SK-N-SH (cell line): ENCODE measurements at regions of chr6 and their contacts with region 1.

Region 1: GRCh38 chr6:44338228-44339122 is 4.0 kb upstream of the SPATS1 start:
- DNase-seq: peak; percentile 71
- H3K4me3 ChIP-seq: no peak overlapping the region; a peak in 1 of 4 replicates
- H3K27ac ChIP-seq: no peak overlapping the region
- H3K4me1 ChIP-seq: peaks cover 0 to 22% of the 10 kb centered on the region in 2 experiments; a peak in 2 of 4 replicates
- H3K27me3 ChIP-seq: peaks cover 36% of the 10 kb centered on the region
- CTCF ChIP-seq: peak; percentile 84
- EP300 ChIP-seq: no peak
- RAD21 ChIP-seq: peak; percentile 92

Region 2: DNA sequence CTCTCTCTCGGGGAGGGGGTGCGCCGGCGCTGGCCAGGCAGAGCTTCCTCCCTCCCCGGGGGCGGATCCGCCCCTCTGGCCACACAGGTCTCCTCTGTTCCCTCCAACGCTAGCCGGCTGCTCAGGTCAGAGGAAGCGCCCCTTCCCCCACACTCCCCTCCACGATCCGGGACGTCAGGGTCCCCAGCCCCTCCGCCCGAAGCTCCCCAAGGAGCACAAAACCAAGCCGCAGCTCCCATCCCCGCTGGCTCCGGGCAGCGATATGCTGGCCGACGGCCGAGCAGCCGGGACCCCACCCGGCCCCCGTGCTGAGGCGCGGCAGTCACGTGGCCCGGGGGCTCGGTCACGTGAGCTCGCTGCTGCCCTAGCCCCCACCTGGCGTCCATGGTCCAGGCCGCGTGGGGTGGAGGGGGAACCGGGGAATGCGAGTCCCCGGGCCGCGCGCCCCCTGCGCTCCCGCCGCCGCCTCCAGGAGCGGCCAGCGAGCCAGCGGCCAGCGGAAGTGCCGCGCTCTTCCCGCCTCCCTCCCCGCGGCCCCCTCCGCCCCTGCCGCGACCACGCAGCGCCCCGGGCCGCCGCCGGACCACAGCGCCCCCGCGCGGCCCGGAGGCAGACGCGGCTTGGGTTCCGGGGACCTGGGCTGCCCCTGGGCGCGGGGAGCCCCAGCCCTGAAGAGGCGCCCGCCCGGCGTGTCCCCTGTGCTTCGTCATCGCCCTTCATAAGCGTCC is 81.3 kb before region 1 on chr6 and contains the start of gene SLC35B2:
- CTCF ChIA-PET with region 1: interaction called, 24 read pairs
- POLR2A ChIA-PET with region 1: interaction called, 5 read pairs
- DNase-seq: peak; percentile 95
- H3K4me3 ChIP-seq: peak within 1 kb of the TSS; percentile 94 to 96
- H3K27ac ChIP-seq: peak within 1 kb of the TSS; percentile 73 to 91
- H3K4me1 ChIP-seq: peaks cover 0 to 37% of the 10 kb centered on the region in 2 experiments; a peak in 1 of 4 replicates
- H3K27me3 ChIP-seq: no peaks in the 10 kb centered on the region
- CTCF ChIP-seq: peak; percentile 67
- EP300 ChIP-seq: no peak
- RAD21 ChIP-seq: no peak
- polyA plus RNA-seq, gene SLC35B2: 125 and 163 TPM in 2 replicates

Region 3: GRCh38 chr6:44270526-44271405 is 67.7 kb before region 1 on chr6:
- CTCF ChIA-PET with region 1: interaction called, 220 read pairs
- POLR2A ChIA-PET with region 1: interaction called, 10 read pairs
- DNase-seq: peak; percentile 96
- H3K4me3 ChIP-seq: peak overlapping the region in 1 of 2 experiments; percentile 51; a peak in 2 of 4 replicates
- H3K27ac ChIP-seq: peak overlapping the region in 1 of 2 experiments; percentile 58; a peak in 1 of 4 replicates
- H3K4me1 ChIP-seq: peaks cover 2 to 21% of the 10 kb centered on the region in 2 experiments; a peak in 1 of 4 replicates
- H3K27me3 ChIP-seq: peaks cover 36% of the 10 kb centered on the region
- CTCF ChIP-seq: no peak
- EP300 ChIP-seq: no peak
- RAD21 ChIP-seq: no peak

Region 4: DNA sequence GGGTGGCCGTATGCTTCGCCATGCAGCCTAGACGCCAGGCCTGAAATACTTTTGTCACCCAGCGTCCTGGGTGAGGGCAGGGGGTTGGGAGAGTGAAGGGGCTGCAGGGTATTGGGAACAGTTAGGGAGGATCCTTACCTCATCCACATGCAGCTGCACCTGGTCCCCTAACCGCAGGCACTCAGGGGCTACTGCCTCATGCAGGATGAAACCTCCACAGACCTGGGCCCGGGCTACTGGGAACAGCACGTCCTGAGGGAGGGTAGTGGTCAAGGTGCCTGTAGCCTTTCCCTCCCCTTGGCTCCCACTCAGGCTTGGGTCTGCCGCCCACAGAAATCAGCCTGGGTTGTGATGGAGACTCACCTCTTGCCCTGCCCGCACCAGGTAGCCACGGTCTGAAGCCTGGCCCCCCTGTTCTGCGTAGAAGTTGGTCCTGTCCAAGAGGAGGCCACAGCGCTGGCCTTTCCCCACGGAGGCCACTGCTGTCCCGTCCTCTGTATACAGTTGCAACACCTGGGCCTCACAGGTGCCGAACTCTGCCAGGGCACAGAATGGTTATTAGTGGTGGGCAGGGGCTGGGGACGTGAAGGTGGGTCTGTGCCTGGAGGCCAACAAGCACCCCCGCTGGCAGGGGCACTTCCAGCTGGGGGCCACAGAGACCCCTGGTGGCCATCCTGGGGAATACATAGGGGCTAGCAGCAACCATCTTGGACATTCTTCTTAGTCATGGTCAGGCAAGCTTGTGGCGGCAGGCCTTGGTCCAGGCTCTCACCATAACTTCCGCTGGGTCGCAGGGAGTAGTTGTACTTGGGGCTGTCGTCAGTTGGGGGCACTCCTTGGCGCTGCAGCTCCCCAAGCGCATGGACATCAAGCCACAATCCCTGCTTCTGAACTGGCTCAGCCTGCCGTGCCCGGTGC is 33.9 kb before region 1 on chr6:
- CTCF ChIA-PET with region 1: interaction called, 47 read pairs
- POLR2A ChIA-PET with region 1: no interaction called
- DNase-seq: peak; percentile 84
- H3K4me3 ChIP-seq: no peak overlapping the region
- H3K27ac ChIP-seq: no peak overlapping the region; a peak in 1 of 4 replicates
- H3K4me1 ChIP-seq: no peaks in the 10 kb centered on the region
- H3K27me3 ChIP-seq: no peaks in the 10 kb centered on the region
- CTCF ChIP-seq: peak; percentile 76
- EP300 ChIP-seq: no peak
- RAD21 ChIP-seq: peak; percentile 54

Region 5: DNA sequence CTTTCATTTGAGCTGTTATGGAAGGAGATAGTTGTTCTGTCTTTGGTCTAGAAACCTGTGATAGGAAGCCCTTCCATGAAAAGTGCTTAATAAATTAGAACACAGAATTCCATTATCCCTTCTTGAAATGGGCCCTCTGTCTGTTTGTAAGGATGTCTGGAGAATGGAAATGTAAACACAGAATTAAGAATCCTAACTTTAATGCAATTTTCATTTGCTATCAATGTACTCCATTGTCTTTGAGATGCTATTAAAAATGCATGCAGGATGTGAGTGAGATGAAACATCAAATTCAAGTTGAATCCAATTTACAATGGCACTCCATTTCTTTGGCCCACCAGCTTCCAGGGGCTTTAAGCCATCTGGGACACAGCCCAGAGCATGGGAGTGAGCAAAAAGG is 11.4 kb before region 1 on chr6:
- CTCF ChIA-PET with region 1: interaction called, 14 read pairs
- POLR2A ChIA-PET with region 1: interaction called, 5 read pairs
- DNase-seq: no peak
- H3K4me3 ChIP-seq: no peak overlapping the region
- H3K27ac ChIP-seq: no peak overlapping the region
- H3K4me1 ChIP-seq: no peaks in the 10 kb centered on the region
- H3K27me3 ChIP-seq: peaks cover 21% of the 10 kb centered on the region
- CTCF ChIP-seq: no peak
- EP300 ChIP-seq: no peak
- RAD21 ChIP-seq: no peak

Region 6: DNA sequence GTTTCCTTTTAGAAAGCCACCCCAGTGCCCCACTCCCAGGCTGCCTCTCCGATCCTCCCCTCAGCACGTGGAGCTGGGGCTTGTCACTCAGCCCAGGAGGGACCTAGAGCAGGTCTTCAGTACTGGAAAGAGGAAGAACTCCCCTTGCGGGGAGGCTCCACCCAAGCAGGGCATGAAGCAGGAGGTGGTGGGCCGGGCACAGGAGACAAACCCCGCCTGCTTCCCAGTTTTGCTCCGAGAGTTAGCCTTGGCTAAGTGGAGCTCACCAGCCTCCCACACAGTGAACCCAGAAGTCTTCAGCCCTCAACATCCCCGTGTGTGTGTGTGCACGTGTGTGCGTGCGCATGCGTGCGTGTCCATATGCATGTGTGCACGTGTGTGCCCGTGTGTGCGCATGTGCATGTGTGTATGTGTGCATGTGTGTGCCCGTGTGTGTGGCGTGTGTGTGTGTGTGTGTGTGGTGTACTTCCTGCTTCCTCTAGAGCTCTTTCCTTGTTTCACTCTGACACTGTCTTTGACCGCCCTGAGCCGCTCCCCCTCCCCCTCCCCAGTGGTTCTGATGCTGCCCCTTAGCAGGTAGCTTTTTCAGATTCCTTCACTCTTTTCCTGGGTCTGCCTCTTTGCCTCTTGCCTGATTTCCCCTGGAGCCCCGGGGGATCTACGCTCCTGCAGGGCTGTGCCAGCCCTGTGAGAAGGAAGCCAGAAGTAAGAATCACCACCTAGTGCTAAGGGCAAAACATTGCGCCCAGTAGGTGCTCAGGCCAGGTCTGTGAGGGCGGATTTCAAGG is 288.8 kb after region 1 on chr6:
- CTCF ChIA-PET with region 1: no interaction called
- POLR2A ChIA-PET with region 1: no interaction called
- DNase-seq: no peak
- H3K4me3 ChIP-seq: no peak overlapping the region
- H3K27ac ChIP-seq: no peak overlapping the region
- H3K4me1 ChIP-seq: no peaks in the 10 kb centered on the region
- H3K27me3 ChIP-seq: no peaks in the 10 kb centered on the region
- CTCF ChIP-seq: no peak
- EP300 ChIP-seq: no peak
- RAD21 ChIP-seq: no peak